ENCODE measurements at regions of chr3 and their contacts with region 1.

Region 1: GRCh38 chr3:49021813-49022687 is at the start of gene NDUFAF3:
- DNase-seq: peak; percentile 74 to 95 (median 87)
- ATAC-seq: peak; percentile 76 to 83 (median 82)
- H3K4me3 ChIP-seq: peak within 1 kb of the TSS; percentile 85 to 90
- H3K4me3 Mint-ChIP-seq: peak within 1 kb of the TSS; percentile 90 to 93 (median 91)
- H3K27ac ChIP-seq: peak within 1 kb of the TSS; percentile 75
- H3K27ac Mint-ChIP-seq: peak within 1 kb of the TSS; percentile 96 to 98
- H3K4me1 ChIP-seq: peaks cover 20 to 53% of the 10 kb centered on the region in 2 experiments
- H3K4me1 Mint-ChIP-seq: peaks cover 55 to 64% (median 58%) of the 10 kb centered on the region in 3 donors
- H3K27me3 ChIP-seq: no peaks in the 10 kb centered on the region
- H3K27me3 Mint-ChIP-seq: no peaks in the 10 kb centered on the region
- total RNA-seq, gene NDUFAF3: 62.8 to 92.1 (median 78.1) TPM

Region 2: DNA sequence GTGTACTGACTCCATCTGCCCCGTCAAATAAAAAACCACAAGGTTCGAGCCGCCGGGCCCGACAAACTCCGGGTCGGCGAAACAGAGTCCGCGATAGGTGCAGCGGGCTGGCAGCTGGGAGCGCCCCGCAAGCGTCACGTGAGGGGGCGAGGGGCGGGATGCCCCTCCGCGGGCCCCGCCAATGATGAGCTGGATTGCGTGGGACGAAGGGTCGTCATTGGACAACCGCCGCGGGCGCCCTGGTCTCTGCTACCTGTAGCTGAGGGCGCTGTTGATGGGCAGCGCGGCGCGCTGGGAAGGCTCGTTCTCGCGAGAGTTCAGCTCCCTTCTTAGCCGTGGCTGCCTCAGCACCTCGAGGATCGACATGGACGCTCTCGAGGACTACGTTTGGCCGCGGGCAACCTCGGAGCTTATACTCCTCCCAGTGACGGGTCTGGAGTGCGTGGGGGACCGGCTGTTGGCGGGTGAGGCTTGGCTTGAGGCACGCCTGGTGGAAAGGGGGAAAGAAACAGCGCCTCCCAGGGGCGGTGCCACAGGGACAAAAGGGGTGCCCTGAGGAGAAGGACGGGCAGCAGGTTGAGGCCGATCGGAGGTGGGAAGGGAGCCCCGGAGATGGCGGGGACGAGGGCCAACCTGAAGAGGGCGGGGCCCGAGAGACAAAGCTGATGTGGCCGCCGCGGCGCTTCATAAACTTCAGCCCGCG is 14.8 kb before region 1 on chr3 and contains the start of gene WDR6:
- CTCF ChIA-PET with region 1: interaction called, 4 to 46 read pairs
- POLR2A ChIA-PET with region 1: interaction called, 4 to 16 read pairs
- DNase-seq: peak; percentile 89 to 99 (median 96)
- ATAC-seq: peak; percentile 90 to 92 (median 91)
- H3K4me3 ChIP-seq: peak within 1 kb of the TSS; percentile 72 to 96
- H3K4me3 Mint-ChIP-seq: peak within 1 kb of the TSS; percentile 93 to 100 (median 99)
- H3K27ac ChIP-seq: peak within 1 kb of the TSS; percentile 95
- H3K27ac Mint-ChIP-seq: peak within 1 kb of the TSS; percentile 100
- H3K4me1 ChIP-seq: peaks cover 0 to 27% of the 10 kb centered on the region in 2 experiments
- H3K4me1 Mint-ChIP-seq: peaks cover 29 to 40% (median 35%) of the 10 kb centered on the region in 3 donors
- H3K27me3 ChIP-seq: no peaks in the 10 kb centered on the region
- H3K27me3 Mint-ChIP-seq: no peaks in the 10 kb centered on the region
- total RNA-seq, gene WDR6: 204 to 300 (median 293) TPM

Region 3: GRCh38 chr3:49093853-49094767 is 72.1 kb after region 1 on chr3 and contains the start of gene QRICH1:
- CTCF ChIA-PET with region 1: interaction called in 1 of 2 experiments, 23 read pairs
- POLR2A ChIA-PET with region 1: interaction called in 1 of 2 experiments, 4 read pairs
- DNase-seq: peak; percentile 91 to 97 (median 95)
- ATAC-seq: peak; percentile 81 to 87 (median 86)
- H3K4me3 ChIP-seq: peak within 1 kb of the TSS; percentile 78 to 99
- H3K4me3 Mint-ChIP-seq: peak within 1 kb of the TSS; percentile 90 to 98 (median 94)
- H3K27ac ChIP-seq: peak within 1 kb of the TSS; percentile 96
- H3K27ac Mint-ChIP-seq: peak within 1 kb of the TSS; percentile 98 to 99
- H3K4me1 ChIP-seq: peaks cover 14 to 37% of the 10 kb centered on the region in 2 experiments
- H3K4me1 Mint-ChIP-seq: peaks cover 40 to 49% (median 44%) of the 10 kb centered on the region in 3 donors
- H3K27me3 ChIP-seq: no peaks in the 10 kb centered on the region
- H3K27me3 Mint-ChIP-seq: no peaks in the 10 kb centered on the region
- total RNA-seq, gene QRICH1: 142 to 202 (median 155) TPM

Measured in T-cell (primary cell).